ENCODE measurements at regions of chr4 and their contacts with region 1.

Region 1: DNA sequence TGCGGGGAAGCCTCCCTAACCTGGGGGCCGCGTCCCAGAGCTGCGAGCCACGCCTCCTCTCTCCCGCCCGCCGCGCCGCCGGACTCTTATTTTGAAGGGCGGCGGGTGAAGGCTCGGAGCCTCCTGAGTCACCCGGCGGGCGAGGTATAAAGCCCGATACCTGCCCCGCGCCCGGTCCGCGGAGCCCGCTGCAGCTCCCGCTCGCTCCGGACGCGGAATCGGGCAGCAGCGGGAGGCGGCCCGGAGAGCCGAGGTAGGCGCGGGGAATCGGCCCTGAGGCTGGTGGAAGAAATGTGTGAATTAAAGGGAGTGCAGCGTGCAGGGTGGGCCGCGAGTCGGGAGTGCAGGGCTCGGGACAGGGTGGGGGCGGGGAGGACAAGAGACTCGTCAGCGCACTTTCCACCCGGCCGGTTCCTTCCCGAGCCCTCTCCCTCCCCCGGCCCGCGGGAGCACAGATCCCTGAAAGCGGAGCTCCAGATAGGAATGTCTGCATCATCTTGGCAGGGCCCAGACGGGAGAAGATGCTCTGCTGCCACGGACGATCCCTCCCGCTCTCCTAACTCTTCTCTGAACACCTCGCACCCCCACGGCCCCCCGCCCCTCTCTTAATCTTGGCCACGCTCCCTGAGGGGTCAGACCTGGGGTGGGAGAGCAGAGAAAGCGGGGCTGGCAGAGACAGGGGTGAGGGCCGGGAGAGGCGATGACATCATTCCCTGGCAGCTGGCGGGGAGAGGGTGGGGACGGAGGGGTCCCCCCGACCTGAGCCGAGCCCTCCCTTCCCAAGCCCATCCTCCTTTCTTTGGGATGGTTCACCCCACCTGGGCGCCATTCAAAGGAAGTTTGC is 177.9 kb downstream of the CBR4 start:
- DNase-seq: peak; percentile 66 to 68
- ATAC-seq: peak; percentile 90 to 95 (median 93)
- H3K4me3 ChIP-seq: peak overlapping the region; percentile 45
- H3K4me3 Mint-ChIP-seq: peak overlapping the region; percentile 84
- H3K27ac ChIP-seq: no peak overlapping the region
- H3K27ac Mint-ChIP-seq: peak overlapping the region in 1 of 2 donors; percentile 86
- H3K4me1 ChIP-seq: peaks cover 20% of the 10 kb centered on the region
- H3K4me1 Mint-ChIP-seq: peaks cover 6 to 31% of the 10 kb centered on the region in 2 donors
- H3K27me3 ChIP-seq: peaks cover 24% of the 10 kb centered on the region
- H3K27me3 Mint-ChIP-seq: peaks cover 52 to 67% of the 10 kb centered on the region in 2 donors
- CTCF ChIP-seq: no peak

Region 2: GRCh38 chr4:168815379-168816345 is 16.5 kb before region 1 on chr4:
- intact Hi-C with region 1: loop called (anchors 1 kb)
- DNase-seq: no peak
- ATAC-seq: no peak
- H3K4me3 ChIP-seq: no peak overlapping the region
- H3K4me3 Mint-ChIP-seq: no peak overlapping the region
- H3K27ac ChIP-seq: no peak overlapping the region
- H3K27ac Mint-ChIP-seq: no peak overlapping the region
- H3K4me1 ChIP-seq: no peaks in the 10 kb centered on the region
- H3K4me1 Mint-ChIP-seq: peaks cover 15 to 16% of the 10 kb centered on the region in 2 donors
- H3K27me3 ChIP-seq: peaks cover 9% of the 10 kb centered on the region
- H3K27me3 Mint-ChIP-seq: peaks cover 12 to 43% of the 10 kb centered on the region in 2 donors
- CTCF ChIP-seq: no peak

Region 3: GRCh38 chr4:168877511-168878491 is 45.7 kb after region 1 on chr4:
- intact Hi-C with region 1: loop called (anchors 5 kb)
- DNase-seq: peak; percentile 49 to 58
- ATAC-seq: peak; percentile 77 to 82 (median 81)
- H3K4me3 ChIP-seq: peak overlapping the region; percentile 35
- H3K4me3 Mint-ChIP-seq: peak overlapping the region; percentile 97
- H3K27ac ChIP-seq: peak overlapping the region; percentile 53
- H3K27ac Mint-ChIP-seq: peak overlapping the region; percentile 80 to 97
- H3K4me1 ChIP-seq: peaks cover 7% of the 10 kb centered on the region
- H3K4me1 Mint-ChIP-seq: peaks cover 30 to 37% of the 10 kb centered on the region in 2 donors
- H3K27me3 ChIP-seq: peaks cover 2% of the 10 kb centered on the region
- H3K27me3 Mint-ChIP-seq: peaks cover 2 to 18% of the 10 kb centered on the region in 2 donors
- CTCF ChIP-seq: no peak

Region 4: GRCh38 chr4:170270628-170271027 is 1438.5 kb after region 1 on chr4:
- intact Hi-C with region 1: no loop called
- DNase-seq: no peak
- ATAC-seq: no peak
- H3K4me3 ChIP-seq: no peak overlapping the region
- H3K4me3 Mint-ChIP-seq: no peak overlapping the region
- H3K27ac ChIP-seq: no peak overlapping the region
- H3K27ac Mint-ChIP-seq: no peak overlapping the region
- H3K4me1 ChIP-seq: no peaks in the 10 kb centered on the region
- H3K4me1 Mint-ChIP-seq: peaks cover 0 to 4% of the 10 kb centered on the region in 2 donors
- H3K27me3 ChIP-seq: no peaks in the 10 kb centered on the region
- H3K27me3 Mint-ChIP-seq: no peaks in the 10 kb centered on the region
- CTCF ChIP-seq: no peak